ENCODE measurements at regions of chr9 and their contacts with region 1.

Region 1: GRCh38 chr9:83937911-83938323 is 16.7 kb upstream of the KIF27 start:
- DNase-seq: peak; percentile 62
- ATAC-seq: peak; percentile 89
- H3K4me3 ChIP-seq: no peak overlapping the region
- H3K27ac ChIP-seq: no peak overlapping the region
- H3K4me1 ChIP-seq: peaks cover 7 to 13% of the 10 kb centered on the region in 2 experiments; a peak in 3 of 4 replicates
- H3K27me3 ChIP-seq: no peaks in the 10 kb centered on the region
- CTCF ChIP-seq: peak; percentile 44 to 90 (median 78); a peak in 5 of 6 replicates
- POLR2A ChIP-seq: no peak
- RAD21 ChIP-seq: peak; percentile 94

Region 2: DNA sequence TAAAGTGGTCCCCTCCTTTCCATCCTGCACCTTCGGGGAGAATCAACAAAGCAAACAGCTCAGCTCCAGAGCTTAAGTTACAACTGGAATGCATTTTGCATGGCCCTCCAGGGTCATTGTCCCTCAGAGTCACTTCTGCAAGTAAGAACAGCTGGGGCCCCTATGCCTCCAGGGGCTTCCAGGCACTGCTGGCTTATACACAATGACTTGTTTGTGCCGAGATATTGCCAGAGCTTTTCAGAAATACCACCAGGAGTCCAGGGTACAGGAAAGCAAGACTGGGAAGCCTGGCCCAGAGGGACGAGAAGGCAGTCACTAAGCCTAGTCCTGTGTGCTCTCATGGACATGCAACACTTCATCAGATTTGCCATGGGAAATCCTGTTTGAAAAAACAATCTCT is 411.0 kb before region 1 on chr9:
- CTCF ChIA-PET with region 1: no interaction called
- POLR2A ChIA-PET with region 1: no interaction called
- RAD21 ChIA-PET with region 1: no interaction called
- intact Hi-C with region 1: no loop called
- DNase-seq: no peak
- ATAC-seq: no peak
- H3K4me3 ChIP-seq: no peak overlapping the region
- H3K27ac ChIP-seq: no peak overlapping the region
- H3K4me1 ChIP-seq: no peaks in the 10 kb centered on the region
- H3K27me3 ChIP-seq: 0 out of 2 replicates have a peak, but pooled peaks cover 6% of the 10 kb centered on the region
- CTCF ChIP-seq: no peak
- POLR2A ChIP-seq: no peak
- RAD21 ChIP-seq: no peak

Region 3: DNA sequence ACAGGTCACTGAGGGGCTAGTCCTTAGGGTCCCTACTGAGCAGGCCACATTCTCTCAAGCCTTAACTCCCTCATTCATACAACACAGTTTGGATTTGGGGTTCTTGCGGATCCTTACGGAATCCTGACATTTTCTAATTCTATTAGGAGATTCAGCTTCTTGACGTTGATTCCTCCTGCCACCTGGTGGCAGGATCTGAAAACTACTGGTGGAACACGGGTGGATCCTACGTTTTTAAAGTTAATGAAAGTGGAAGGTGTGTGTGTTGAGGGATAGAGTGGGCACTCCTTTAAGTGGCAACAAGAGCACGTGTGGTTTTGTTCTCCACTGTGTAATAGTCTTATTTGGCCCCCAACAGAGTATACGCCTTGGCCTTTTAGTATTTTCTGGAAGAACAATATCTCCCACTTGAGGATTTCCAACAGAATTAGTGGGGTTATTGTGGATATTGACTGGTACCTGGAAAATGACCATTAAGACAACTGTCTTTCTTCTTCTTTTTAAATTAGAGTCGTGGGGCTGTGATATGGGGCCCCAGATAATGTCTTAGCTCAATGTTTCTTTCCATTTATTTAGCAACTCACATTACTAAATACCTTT is 377.5 kb after region 1 on chr9:
- CTCF ChIA-PET with region 1: interaction called, 8 read pairs
- POLR2A ChIA-PET with region 1: no interaction called
- RAD21 ChIA-PET with region 1: no interaction called
- intact Hi-C with region 1: loop called (anchors 1 kb)
- DNase-seq: peak; percentile 61
- ATAC-seq: peak; percentile 92
- H3K4me3 ChIP-seq: no peak overlapping the region
- H3K27ac ChIP-seq: no peak overlapping the region
- H3K4me1 ChIP-seq: no peaks in the 10 kb centered on the region
- H3K27me3 ChIP-seq: no peaks in the 10 kb centered on the region
- CTCF ChIP-seq: peak; percentile 71 to 83 (median 73)
- POLR2A ChIP-seq: no peak
- RAD21 ChIP-seq: peak; percentile 88

Region 4: GRCh38 chr9:85142968-85143367 is 1205.1 kb after region 1 on chr9:
- CTCF ChIA-PET with region 1: no interaction called
- POLR2A ChIA-PET with region 1: no interaction called
- RAD21 ChIA-PET with region 1: no interaction called
- intact Hi-C with region 1: loop called (anchors 10 kb)
- DNase-seq: peak; percentile 4
- ATAC-seq: peak; percentile 83
- H3K4me3 ChIP-seq: no peak overlapping the region
- H3K27ac ChIP-seq: no peak overlapping the region
- H3K4me1 ChIP-seq: no peaks in the 10 kb centered on the region
- H3K27me3 ChIP-seq: peaks cover 15% of the 10 kb centered on the region
- CTCF ChIP-seq: peak; percentile 35 to 66 (median 61); a peak in 5 of 6 replicates
- POLR2A ChIP-seq: no peak
- RAD21 ChIP-seq: peak; percentile 53

Measured in HCT116 (cell line).